Transverse colon (tissue), 4 donors: ENCODE measurements at regions of chr3 and their contacts with region 1.

Region 1: DNA sequence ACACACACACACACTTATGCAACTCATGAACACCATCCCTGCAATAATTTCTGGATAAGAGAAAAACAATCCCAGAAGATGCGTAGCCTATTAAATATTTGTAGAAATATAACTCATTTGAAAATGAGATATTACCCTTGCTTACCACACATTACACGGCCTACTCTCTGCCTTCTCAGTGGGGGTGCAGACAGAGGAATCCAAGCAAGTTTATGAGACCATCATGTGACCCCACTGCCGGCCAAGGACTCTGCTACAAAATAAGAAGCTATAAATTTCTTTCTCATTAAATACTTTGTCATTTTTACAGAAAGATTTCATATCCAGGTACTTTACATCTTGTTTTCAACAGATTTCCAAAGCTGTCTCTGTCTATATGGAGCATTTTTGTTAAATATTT is 286.3 kb downstream of the ZNF385D start:
- DNase-seq: no peak
- H3K4me3 ChIP-seq: no peak overlapping the region
- H3K27ac ChIP-seq: no peak overlapping the region
- H3K4me1 ChIP-seq: peaks cover 0 to 4% (median 0%) of the 10 kb centered on the region in 4 donors
- H3K27me3 ChIP-seq: no peaks in the 10 kb centered on the region
- CTCF ChIP-seq: no peak
- EP300 ChIP-seq: no peak
- POLR2A ChIP-seq: no peak

Region 2: DNA sequence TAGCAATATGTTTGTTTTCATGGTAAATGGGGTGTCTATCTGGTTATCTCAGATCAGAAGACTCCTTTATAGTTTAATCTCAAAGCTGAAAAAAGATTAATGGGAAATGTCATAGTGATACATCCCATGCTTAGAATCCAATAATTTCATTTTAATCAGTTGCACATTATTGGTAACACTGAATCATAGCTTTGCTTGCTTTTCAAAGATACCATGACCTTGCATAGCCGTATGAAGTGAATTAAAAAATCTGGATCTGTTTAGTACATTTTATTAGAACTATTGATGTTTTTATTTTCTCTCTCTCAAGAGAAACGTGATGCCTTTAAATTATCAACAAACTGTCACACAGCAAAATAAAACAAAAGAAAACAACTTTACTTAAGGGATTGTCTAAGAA is 772.1 kb before region 1 on chr3:
- in situ Hi-C with region 1: no loop called
- intact Hi-C with region 1: loop called (anchors 5 kb)
- DNase-seq: no peak
- H3K4me3 ChIP-seq: no peak overlapping the region
- H3K27ac ChIP-seq: no peak overlapping the region
- H3K4me1 ChIP-seq: no peaks in the 10 kb centered on the region
- H3K27me3 ChIP-seq: no peaks in the 10 kb centered on the region
- CTCF ChIP-seq: no peak
- EP300 ChIP-seq: no peak
- POLR2A ChIP-seq: no peak